ENCODE measurements at regions of chr1 and their contacts with region 1.

Region 1: DNA sequence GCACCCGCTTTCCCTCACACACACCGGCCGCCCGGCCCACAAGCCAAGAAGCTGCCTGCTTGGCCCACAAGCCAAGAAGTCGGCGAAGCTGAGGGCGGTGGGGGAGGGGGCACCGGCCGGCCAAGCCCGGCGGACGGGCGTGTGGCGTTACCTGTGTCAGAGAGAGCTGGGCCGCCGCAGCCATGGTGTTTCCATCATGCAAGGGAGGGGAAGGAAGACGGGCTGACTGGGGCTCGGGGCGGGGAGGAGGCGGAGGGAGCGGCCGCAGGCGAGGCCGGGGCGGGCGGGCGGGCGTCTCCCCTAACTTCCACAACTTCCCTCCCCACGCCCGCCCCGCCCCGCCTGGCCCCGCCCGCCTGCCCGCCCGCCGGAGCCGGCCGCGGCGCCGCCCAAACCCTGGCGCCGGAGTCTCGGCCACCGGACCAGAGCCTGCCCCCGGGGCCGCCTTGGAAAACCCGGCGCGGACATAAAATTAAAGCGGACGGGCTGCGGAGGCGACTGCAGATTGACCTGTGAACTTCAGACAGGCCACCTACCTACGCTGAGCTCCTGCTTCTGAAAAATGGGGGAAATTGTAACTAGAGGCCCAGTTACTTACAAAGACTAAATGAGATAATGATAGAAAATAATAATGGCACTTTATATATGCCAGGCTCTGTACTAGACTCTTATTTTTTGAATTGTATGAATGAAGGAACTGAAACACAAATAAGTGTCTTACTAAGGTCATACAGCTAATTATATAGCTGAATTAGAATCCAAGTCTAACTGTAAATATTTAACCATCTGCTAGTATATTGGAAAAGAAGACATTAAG is at the start of gene EPS15:
- DNase-seq: peak; percentile 93
- H3K4me3 ChIP-seq: peak within 1 kb of the TSS; percentile 68 to 96 (median 89)
- H3K27ac ChIP-seq: peak within 1 kb of the TSS; percentile 85 to 95 (median 92)
- H3K4me1 ChIP-seq: peaks cover 3 to 36% (median 25%) of the 10 kb centered on the region in 4 donors
- H3K27me3 ChIP-seq: no peaks in the 10 kb centered on the region
- CTCF ChIP-seq: no peak
- EP300 ChIP-seq: no peak
- POLR2A ChIP-seq: peak; percentile 24 to 59
- total RNA-seq, gene EPS15: 72.4 to 131 (median 103) TPM

Region 2: DNA sequence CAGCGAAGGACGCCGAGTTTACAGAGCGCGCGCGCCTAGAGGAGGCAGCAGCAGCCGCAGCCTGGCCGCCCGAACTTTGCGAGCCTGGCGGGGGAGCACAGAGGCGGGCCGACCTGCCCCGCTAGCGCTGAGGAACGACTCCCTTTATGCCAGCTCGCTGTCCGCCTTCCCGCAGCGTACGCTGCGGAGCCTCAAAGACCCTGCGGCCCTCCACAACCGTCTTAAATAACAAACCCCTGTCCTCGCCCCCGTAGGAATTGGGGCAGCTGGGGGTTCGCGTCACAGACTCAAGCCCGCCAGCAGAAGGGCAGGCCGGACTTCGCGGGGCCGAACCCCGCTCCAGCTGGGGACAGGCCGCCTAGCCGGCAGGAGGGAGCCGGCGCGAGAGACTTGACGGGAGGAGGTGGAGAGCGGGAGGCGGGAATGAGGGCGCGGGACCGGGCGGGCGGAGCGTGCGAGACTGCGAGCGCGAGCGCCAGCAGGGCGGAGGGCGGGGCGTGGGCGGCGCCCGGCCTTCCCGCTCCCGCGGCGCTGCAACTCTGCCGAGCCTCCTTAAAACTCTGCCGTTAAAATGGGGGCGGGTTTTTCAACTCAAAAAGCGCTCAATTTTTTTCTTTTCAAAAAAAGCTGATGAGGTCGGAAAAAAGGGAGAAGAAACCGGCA is 551.0 kb before region 1 on chr1:
- intact Hi-C with region 1: loop called (anchors 10 kb)
- DNase-seq: peak; percentile 95
- H3K4me3 ChIP-seq: peak overlapping the region; percentile 56 to 81 (median 73)
- H3K27ac ChIP-seq: peak overlapping the region; percentile 91 to 98 (median 96)
- H3K4me1 ChIP-seq: peaks cover 0 to 20% (median 11%) of the 10 kb centered on the region in 4 donors
- H3K27me3 ChIP-seq: no peaks in the 10 kb centered on the region
- CTCF ChIP-seq: peak; percentile 13 to 61 (median 50)
- EP300 ChIP-seq: no peak
- POLR2A ChIP-seq: peak; percentile 80 to 82

Region 3: DNA sequence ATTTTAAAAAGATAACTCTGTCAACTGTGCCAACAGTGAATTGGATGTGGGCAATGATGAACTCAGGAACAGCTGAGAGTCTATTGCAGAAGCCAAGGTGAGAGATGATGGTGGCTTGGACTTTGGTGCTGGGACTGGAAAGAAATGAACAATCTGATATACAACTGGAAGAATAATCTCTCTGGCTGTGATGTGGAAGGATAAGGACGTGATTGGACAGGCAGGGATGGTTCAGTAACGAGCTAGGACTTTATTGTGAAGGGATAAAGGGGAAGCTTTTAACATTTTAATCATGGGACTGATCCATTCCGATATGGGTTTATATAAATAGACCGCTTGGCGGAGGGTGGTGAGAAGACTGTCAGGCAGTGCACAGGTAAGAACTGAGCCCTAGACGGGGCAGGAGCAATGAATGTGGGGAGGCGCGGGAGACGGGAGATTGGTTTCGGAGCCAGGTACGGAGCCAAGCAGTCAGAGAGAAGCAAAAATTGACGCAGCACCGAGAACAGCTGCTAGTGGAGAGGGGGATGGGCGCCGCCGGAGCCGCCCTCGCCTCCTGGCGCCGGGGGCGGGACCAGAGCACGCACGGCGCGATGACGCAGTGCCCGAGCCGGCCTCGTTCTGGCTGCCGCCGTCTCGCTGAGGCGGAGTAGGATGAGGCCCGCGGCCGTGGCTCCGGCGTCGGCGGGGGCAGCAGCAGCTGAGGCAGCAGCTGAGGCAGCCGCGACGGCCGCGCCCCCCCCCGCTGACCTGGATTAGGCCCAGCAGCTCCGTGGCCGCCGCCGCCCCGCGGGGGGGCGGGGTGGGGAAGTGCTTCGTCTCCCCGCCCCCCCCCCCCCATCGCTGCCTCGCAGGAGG is 283.4 kb before region 1 on chr1 and contains the start of gene RNF11:
- intact Hi-C with region 1: loop called (anchors 5 kb)
- DNase-seq: peak; percentile 97
- H3K4me3 ChIP-seq: peak within 1 kb of the TSS; percentile 76 to 100 (median 88)
- H3K27ac ChIP-seq: peak within 1 kb of the TSS; percentile 93 to 98 (median 96)
- H3K4me1 ChIP-seq: peaks cover 0 to 43% (median 40%) of the 10 kb centered on the region in 4 donors
- H3K27me3 ChIP-seq: no peaks in the 10 kb centered on the region
- CTCF ChIP-seq: no peak
- EP300 ChIP-seq: peak in 2 of 4 donors; percentile 7 to 47
- POLR2A ChIP-seq: peak; percentile 72 to 75
- total RNA-seq, gene RNF11: 85.8 to 116 (median 101) TPM

Region 4: DNA sequence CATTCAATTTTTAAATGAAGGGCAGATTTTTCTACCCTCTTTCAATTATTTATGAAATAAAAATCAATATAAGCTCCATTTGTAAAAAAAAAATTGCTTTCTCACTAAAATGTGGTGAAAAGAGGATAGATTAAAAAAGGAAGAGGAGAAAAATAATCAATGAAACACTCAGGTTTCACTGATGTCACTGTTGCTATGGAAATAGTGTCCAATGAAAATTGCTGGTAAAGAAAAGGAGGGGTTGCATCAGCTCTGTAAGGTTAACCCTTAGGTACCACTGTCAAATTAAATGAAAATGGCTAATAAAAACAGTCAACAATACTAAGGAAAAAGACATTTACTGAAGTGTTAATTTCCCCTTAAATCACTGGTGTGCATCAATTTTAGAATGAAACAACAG is 97.3 kb before region 1 on chr1:
- intact Hi-C with region 1: loop called (anchors 5 kb)
- DNase-seq: no peak
- H3K4me3 ChIP-seq: no peak overlapping the region
- H3K27ac ChIP-seq: peak overlapping the region in 2 of 4 donors; percentile 9 to 20
- H3K4me1 ChIP-seq: peaks cover 0 to 42% (median 18%) of the 10 kb centered on the region in 4 donors
- H3K27me3 ChIP-seq: no peaks in the 10 kb centered on the region
- CTCF ChIP-seq: no peak
- EP300 ChIP-seq: no peak
- POLR2A ChIP-seq: no peak

Region 5: DNA sequence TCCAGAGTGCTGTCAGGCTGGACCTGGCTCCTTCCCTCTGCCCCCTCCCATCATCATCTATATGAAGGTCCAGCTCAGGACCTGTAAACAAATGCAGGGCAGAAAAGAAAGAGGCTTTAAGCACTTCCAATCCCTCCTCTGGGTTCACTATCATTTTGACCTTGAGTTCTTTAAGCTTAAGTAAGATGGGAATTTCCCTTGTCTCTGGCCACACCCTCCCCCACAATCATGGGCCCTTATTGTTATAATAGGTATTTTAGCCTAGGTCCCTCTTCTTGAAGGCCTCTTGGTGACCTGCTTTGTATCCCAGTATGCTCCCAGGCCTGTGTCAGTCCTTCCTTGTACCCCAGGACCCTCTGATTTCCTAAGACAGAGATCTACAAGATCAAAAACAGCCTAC is 44.9 kb after region 1 on chr1:
- intact Hi-C with region 1: no loop called
- DNase-seq: no peak
- H3K4me3 ChIP-seq: no peak overlapping the region
- H3K27ac ChIP-seq: no peak overlapping the region
- H3K4me1 ChIP-seq: peaks cover 0 to 41% (median 21%) of the 10 kb centered on the region in 4 donors
- H3K27me3 ChIP-seq: no peaks in the 10 kb centered on the region
- CTCF ChIP-seq: no peak
- EP300 ChIP-seq: no peak
- POLR2A ChIP-seq: no peak

Region 6: DNA sequence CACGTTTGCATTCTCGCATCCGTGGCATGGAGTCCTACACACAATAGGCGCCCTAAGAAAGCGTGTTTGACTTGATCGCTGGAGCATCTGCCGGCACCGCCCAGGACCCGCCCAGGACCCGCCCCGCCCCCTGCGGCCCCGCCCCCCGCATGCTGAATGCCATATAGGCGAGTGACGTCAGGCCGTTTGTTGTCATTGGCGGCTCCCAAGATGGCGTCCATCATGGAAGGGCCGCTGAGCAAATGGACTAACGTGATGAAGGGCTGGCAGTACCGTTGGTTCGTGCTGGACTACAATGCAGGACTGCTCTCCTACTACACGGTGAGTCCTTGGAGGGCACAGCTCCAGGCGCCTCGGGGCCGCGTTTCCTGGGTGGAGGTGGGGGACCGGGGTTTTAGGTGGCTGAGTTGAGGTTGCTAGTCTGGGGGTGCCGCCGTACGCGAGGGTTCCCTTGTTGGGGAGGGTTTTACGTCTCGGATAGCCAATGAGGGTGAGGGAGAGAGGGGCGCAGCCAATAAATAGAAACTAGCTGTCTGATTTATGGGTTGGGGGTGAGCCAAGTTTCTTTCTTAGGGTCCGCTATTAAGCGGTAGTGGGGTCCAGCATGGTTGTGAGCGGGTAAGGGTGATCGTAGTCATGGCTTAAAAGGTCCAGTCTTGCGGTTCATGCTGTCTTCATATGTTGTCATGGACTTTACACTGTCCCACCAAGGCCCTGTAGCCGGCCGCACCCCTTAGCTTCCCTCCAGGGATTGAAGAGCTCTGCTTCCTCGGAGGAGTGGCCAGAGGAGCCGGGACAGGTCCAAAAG is 97.8 kb after region 1 on chr1 and contains the start of gene OSBPL9:
- intact Hi-C with region 1: loop called (anchors 5 kb)
- DNase-seq: peak; percentile 96
- H3K4me3 ChIP-seq: peak within 1 kb of the TSS; percentile 66 to 80 (median 77)
- H3K27ac ChIP-seq: peak within 1 kb of the TSS; percentile 84 to 90 (median 88)
- H3K4me1 ChIP-seq: peaks cover 0 to 63% (median 49%) of the 10 kb centered on the region in 4 donors
- H3K27me3 ChIP-seq: no peaks in the 10 kb centered on the region
- CTCF ChIP-seq: no peak
- EP300 ChIP-seq: no peak
- POLR2A ChIP-seq: peak; percentile 32 to 47
- total RNA-seq, gene OSBPL9: 49.7 to 81.5 (median 71.9) TPM

Region 7: GRCh38 chr1:51768971-51769588 is 249.8 kb after region 1 on chr1:
- intact Hi-C with region 1: loop called (anchors 5 kb)
- DNase-seq: no peak
- H3K4me3 ChIP-seq: no peak overlapping the region
- H3K27ac ChIP-seq: no peak overlapping the region
- H3K4me1 ChIP-seq: peaks cover 0 to 6% (median 0%) of the 10 kb centered on the region in 4 donors
- H3K27me3 ChIP-seq: no peaks in the 10 kb centered on the region
- CTCF ChIP-seq: peak; percentile 66 to 81 (median 78)
- EP300 ChIP-seq: no peak
- POLR2A ChIP-seq: no peak